ENCODE measurements at regions of chr16 and their contacts with region 1.

Region 1: DNA sequence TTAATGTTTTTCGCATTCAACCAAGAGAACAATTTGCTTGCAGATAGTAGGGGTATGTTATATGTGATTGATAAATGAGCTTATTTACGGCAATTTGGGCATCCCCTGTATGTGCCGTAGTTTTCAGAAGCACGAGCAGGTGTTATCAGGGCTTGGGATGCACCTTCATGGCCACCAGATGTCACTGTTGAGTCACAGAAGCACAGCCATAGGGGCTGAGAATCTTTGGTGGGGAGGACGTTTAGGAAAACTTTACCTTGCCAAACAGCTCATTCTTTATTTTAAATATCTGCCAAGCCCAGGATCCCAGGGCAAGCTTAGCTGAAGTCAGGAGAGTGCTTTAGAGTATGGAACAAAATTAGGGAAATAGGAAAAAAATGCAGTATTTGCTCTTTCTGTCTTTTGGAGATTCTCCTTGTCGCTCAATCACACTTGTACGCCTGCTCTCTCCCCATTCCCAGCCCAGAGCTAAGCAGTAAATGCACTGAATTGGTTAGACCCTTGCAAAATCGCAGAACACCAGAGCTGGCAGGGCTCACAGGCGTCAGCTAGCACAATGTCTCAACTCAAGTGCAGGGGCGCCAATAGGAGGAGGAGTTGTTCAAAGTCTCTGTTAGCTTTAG is 93.6 kb upstream of the MPHOSPH6 start:
- DNase-seq: no peak

Region 2: GRCh38 chr16:82311528-82311927 is 47.9 kb after region 1 on chr16:
- intact Hi-C with region 1: no loop called
- DNase-seq: no peak

Region 3: DNA sequence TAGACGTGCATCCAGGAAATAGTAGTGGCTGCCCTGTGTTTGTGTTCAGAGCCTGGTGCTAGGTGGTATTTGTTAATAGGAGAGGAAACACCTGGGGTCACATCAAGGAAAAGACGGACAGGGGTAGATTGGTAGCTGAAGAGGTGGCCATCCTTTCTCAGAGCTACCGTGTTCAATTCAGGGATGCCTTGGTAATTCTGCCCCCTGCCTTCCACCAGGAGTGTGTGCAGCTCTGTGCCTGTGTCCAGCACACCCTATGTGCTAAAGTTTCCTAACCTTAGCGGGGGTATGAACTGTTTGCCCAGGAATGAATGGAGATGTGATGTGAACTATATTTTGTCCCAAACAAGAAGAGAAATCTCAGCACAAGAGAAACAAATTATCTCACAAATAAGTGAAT is 80.5 kb after region 1 on chr16:
- intact Hi-C with region 1: loop called (anchors 1 kb)
- DNase-seq: no peak

Region 4: DNA sequence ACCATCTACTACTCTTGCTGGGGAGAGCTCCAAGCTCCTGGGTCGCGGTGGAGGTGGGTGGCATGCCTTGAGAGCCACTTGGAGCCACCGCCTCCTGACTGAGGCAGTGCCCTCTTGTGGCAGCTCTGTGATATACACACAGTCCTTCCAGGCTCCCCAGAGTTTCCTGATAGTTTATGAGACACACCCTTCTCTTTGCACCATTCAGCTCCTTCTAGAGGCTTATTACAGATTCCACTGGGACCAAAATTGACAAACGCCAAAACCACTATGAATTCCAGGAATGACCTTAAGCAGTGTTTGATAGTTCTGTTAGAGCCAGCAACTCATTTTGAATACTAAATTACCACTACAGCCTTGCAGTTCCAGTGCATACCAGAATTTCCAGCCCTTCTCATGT is 193.1 kb after region 1 on chr16:
- intact Hi-C with region 1: loop called (anchors 5 kb)
- DNase-seq: no peak

Region 5: DNA sequence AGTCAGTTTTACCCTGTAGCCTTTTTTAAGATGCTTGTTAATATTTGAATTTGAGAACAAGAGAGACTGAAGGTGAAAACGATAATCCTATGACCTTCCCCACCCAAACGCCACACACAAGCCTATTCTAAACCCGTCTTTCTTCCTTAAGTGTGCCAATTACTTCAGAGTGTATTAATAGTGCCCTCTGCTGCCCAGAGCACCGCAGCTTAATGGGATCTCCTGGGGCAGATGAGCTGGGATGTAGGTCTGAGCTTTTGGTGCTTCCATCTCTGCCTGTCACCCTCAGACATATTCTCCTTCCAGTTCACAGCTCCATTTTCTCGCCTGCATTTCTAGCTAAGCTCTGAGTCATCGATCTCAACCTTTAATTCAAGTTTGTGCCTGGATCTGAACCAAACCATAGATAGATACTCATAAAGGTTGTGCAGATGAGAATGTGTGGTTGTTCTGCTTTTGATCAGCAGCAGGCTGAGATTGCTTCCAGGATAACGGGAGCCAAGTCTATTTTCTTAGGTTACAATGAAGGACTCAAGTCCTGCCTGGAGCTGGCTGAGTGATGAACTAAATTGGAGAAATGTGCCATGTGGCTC is 316.8 kb after region 1 on chr16:
- intact Hi-C with region 1: loop called (anchors 5 kb)
- DNase-seq: no peak

Measured in cardiac septum (tissue), 1 donor.